Panc1 (cell line): ENCODE measurements at regions of chr3 and their contacts with region 1.

Region 1: GRCh38 chr3:190012314-190012782 is 108.3 kb downstream of the P3H2 start:
- DNase-seq: peak; percentile 83
- ATAC-seq: peak; percentile 90
- H3K4me3 ChIP-seq: peak overlapping the region; percentile 10 to 51; a peak in 3 of 4 replicates
- H3K27ac ChIP-seq: peak overlapping the region; percentile 86
- H3K4me1 ChIP-seq: peaks cover 56% of the 10 kb centered on the region
- H3K27me3 ChIP-seq: no peaks in the 10 kb centered on the region
- CTCF ChIP-seq: no peak

Region 2: DNA sequence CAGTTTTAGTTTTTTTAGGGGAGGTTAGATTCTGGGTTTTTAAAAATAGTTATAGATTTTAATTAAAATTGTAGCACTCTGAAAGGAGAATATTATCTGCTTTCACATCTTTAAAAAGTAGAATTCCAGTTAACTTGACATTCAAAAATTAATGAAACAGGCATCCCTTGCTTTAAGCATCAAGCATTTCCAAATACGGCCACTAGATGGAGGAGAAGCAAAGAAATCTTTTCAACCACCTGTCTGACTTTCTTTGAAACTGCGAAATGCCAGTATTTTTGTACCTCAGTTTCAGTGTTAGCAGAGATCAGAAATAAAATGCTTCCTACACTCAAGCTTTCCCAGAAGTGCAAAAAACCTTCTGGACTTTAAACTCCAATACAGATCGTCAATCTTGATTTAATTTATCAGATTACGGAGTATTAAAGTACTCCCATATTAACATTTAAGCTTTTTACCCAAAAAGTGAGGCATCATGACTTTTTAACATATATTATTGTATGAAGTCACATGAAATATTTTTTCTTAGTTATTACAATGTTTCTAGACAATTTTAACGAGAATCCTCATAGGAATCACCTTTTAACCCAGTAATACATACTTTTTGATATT is 45.0 kb before region 1 on chr3:
- CTCF ChIA-PET with region 1: no interaction called
- POLR2A ChIA-PET with region 1: interaction called, 3 read pairs
- in situ Hi-C with region 1: no loop called
- intact Hi-C with region 1: loop called (anchors 5 kb)
- DNase-seq: peak; percentile 75
- ATAC-seq: peak; percentile 79
- H3K4me3 ChIP-seq: no peak overlapping the region
- H3K27ac ChIP-seq: peak overlapping the region; percentile 6; the same call in 1 of the 2 replicates
- H3K4me1 ChIP-seq: 0 out of 2 replicates have a peak, but pooled peaks cover 2% of the 10 kb centered on the region
- H3K27me3 ChIP-seq: no peaks in the 10 kb centered on the region
- CTCF ChIP-seq: peak; percentile 82; the same call in 1 of the 2 replicates

Region 3: GRCh38 chr3:190205739-190206138 is 193.4 kb after region 1 on chr3:
- CTCF ChIA-PET with region 1: no interaction called
- POLR2A ChIA-PET with region 1: no interaction called
- in situ Hi-C with region 1: no loop called
- intact Hi-C with region 1: loop called (anchors 2 kb)
- DNase-seq: no peak
- ATAC-seq: no peak
- H3K4me3 ChIP-seq: no peak overlapping the region
- H3K27ac ChIP-seq: no peak overlapping the region
- H3K4me1 ChIP-seq: peaks cover 3% of the 10 kb centered on the region; the same call in 1 of the 2 replicates
- H3K27me3 ChIP-seq: no peaks in the 10 kb centered on the region
- CTCF ChIP-seq: no peak

Region 4: GRCh38 chr3:190265796-190266195 is 253.4 kb after region 1 on chr3:
- CTCF ChIA-PET with region 1: no interaction called
- POLR2A ChIA-PET with region 1: no interaction called
- in situ Hi-C with region 1: no loop called
- intact Hi-C with region 1: no loop called
- DNase-seq: no peak
- ATAC-seq: peak; percentile 34; the same call in 1 of the 2 replicates
- H3K4me3 ChIP-seq: no peak overlapping the region
- H3K27ac ChIP-seq: no peak overlapping the region
- H3K4me1 ChIP-seq: no peaks in the 10 kb centered on the region
- H3K27me3 ChIP-seq: no peaks in the 10 kb centered on the region
- CTCF ChIP-seq: no peak